ENCODE measurements at regions of chr7 and their contacts with region 1.

Region 1: DNA sequence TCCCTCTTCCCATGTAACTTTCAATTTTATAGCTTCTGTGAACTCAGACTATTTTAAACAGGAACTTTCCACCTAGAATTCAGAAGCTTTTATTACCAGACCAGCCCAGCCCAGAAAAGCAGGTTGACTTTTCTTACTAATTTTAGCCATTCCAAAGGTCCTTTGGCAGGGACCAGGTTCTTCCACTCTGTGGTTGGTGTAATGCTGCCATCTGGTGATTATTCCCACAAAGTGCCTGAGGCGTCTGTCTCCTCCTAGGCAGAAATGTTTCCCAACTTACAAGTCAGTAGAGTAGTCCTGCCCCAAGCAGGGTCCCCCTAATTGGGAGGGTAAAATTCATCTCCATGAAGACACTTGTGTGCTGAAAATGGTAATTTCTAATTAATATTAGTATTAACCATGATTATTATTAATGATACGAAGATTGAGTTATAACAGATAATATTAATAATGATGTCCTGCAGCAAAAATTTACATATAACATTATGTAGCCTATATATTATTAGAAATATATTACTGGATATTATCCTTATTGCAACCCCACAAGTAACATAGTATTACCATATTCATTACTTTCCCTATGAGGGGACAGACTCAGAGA is 53.0 kb upstream of the PPP1R17 start:
- DNase-seq: no peak

Region 2: DNA sequence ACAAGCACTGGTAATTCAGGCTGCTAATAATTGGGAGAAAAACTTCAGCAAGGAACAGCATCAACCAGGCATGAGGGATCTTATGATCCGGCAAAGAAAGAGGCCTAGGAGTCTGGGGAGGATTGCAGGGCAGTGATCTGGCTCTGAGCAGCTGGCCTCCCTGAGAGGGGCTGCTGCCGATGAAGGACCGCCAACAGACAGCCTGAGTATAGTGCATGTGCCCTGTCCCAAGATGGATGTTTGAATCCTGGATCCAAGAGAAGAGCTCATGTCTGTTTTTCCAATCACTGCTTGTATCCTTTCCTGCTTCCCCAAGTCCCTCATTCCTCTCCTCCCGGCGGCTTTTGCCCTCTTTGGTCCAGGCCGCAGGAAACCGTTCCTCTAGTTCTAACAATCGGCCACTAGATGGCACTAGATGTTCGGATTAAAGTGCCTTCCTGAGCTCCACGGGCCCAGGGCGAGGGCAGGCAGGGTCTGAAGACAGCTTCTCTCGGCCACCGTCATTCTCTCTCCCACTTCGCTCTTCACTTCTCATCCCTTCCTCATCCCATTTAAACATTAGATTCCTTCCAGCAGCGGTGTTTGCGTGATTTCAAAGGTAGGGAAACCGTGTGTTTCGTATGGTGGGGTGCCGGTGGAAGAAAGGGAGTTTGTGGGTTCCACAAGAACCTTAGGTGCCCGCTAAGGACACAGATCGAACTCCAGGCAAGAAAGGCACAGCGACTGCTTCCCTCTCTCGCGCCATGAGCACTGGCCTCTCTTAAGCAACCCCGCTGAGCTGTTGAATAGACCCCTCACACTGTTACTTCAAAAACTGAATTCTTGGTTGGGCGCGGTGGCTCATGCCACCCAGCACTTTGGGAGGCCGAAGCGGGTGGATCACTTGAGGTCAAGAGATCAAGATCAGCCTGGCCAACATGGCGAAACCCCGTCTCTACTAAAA is 499.5 kb before region 1 on chr7:
- intact Hi-C with region 1: loop called in 1 of 2 experiments (anchors 10 kb)
- DNase-seq: peak; percentile 83

Region 3: DNA sequence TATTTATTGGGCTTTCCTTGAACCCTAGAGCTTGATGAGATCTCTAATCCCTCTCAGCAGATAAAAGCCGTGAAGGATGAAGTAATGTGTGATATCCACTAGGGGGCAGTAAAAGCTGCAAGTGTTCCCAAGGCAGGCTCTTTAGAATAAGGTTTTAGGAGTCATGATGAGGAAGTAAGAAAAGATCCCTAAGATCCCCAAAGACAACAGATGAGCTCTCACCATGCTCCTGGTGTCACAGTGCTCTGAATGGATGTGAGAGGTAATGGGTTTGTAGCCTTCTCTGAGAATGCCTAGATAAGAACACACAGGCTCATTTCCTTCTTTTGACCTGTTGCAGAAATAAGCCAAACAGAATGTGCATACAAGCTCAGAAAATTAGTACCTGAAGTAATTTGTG is 190.5 kb before region 1 on chr7:
- intact Hi-C with region 1: loop called in 1 of 2 experiments (anchors 10 kb)
- DNase-seq: no peak

Region 4: DNA sequence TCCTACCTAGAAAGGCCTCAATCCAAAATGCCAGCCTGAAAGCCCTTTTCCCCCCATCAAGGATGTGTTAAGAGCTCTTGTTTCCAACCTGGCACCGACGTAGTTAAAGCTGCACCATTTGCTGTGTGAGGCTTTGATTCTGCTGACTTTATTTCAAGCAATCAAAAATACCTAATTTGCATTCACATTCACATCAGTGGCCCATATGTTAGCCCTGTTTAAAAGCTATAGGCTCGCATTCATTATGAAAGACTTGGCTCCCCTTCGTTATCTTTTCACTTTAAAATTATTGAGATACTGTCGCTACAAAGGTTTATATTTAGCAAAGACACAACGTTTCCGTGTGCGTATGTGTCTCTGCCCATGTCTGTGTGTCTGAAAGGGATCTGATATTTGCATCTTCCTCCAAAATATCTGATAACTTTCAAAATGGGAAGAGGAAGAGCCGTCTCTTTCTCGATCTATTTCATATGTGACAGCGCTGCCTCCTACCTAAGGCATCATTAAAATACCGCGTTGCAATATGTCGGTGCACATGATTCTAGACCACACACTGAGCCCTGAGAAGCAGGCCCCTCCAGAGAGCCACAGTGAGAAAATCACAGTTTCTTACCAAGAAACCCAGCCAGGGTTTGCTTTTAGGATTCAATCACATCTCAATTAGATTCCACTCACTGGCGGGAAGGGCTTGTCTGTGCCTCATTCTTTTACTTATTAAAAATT is 177.2 kb before region 1 on chr7:
- intact Hi-C with region 1: loop called in 1 of 2 experiments (anchors 10 kb)
- DNase-seq: no peak